MCF 10A (cell line): ENCODE measurements at regions of chr11 and their contacts with region 1.

Region 1: DNA sequence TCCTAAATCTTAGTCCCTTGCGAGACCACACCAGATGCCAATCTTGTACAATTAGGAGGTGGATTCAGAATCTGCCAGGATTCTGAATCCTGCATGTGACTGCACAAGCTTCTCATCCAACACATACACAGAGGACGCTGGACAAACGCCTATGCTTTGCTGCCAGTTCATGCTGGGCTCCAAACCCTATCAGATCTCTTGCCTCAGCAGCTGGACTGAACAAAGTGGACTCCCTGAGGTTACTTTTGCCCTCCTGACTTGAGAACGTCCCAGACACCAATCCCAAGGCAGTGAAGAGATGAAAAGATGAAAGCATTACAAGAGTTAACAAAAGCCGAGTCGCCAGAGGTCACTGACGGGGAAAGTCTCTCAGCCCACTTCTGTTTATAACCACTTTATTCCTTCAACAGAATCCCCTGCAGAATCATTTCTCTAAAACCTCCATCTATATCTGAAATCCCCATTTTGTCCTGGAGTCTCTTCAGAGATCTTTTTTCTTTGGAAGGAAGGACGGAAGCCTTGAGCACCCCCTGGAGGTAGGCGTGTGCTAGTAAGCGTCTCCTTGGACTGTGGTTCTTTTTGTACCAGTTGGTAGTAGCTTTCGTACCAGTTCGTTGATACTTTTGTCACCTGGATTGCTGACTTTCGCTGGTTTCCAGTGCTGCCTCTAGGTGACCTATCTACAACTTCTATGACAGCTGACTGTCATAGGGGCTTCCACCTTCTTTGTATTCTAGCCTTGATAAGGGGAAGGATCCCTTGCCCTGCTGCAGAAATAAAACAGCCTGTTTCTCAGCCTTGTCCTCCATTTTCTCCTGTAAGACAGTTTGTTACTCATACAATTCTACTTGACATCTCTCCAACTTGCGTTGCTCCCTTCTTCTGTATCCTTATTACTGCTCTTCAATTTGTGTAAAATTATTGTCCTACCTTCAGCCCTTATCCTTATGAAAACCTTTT is 26.1 kb upstream of the EED start:
- DNase-seq: peak; percentile 79
- H3K4me3 Mint-ChIP-seq: no peak overlapping the region
- H3K27ac Mint-ChIP-seq: no peak overlapping the region
- H3K4me1 Mint-ChIP-seq: peaks cover 6% of the 10 kb centered on the region
- H3K27me3 Mint-ChIP-seq: no peaks in the 10 kb centered on the region
- CTCF ChIP-seq: peak; percentile 81

Region 2: DNA sequence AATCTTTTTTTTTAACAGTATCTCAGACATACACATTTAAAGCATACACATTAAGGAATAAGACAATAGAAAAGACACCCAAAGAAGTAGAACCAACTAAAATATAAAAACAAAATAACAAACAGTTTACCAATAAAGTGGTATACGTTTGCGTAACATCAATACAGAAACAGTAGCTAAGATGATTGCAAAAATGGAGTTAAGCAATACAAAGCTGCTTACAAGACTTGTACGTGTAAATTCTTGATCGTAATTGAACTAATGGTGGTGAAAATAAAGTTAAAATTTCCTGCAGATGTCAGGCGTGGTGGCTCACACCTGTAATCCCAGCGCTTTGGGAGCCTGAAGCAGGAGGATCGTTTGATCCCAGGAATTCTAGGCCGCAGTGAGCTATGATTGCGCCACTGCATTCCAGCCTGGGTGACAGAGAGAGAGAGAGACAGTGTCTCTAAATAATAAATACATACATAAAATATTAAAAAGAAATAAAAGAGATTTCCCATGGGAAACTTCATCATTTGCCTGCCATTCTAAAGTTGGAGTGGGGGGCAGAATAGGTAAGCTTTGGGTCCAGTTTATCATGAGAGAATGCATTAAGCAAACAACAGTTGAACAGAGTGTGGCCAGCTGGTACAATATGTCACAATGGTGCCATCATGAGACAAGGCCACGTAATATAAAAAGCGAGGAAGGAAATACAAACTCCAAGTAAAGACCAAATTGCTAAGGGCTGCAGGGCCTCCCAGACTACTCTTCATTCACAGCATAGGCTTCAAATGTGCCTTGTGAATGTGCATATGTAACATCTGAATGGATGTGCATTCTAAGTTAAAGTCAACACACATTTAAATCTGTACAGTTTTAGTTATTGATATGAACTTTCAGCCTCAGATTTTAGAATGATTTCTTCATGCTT is 12.7 kb before region 1 on chr11:
- CTCF ChIA-PET with region 1: interaction called, 11 read pairs
- POLR2A ChIA-PET with region 1: no interaction called
- intact Hi-C with region 1: no loop called
- DNase-seq: no peak
- H3K4me3 Mint-ChIP-seq: no peak overlapping the region
- H3K27ac Mint-ChIP-seq: no peak overlapping the region
- H3K4me1 Mint-ChIP-seq: no peaks in the 10 kb centered on the region
- H3K27me3 Mint-ChIP-seq: no peaks in the 10 kb centered on the region
- CTCF ChIP-seq: no peak

Region 3: GRCh38 chr11:86230921-86231430 is 12.6 kb after region 1 on chr11:
- CTCF ChIA-PET with region 1: interaction called, 24 read pairs
- POLR2A ChIA-PET with region 1: no interaction called
- intact Hi-C with region 1: no loop called
- DNase-seq: peak; percentile 40
- H3K4me3 Mint-ChIP-seq: no peak overlapping the region
- H3K27ac Mint-ChIP-seq: no peak overlapping the region
- H3K4me1 Mint-ChIP-seq: peaks cover 18% of the 10 kb centered on the region
- H3K27me3 Mint-ChIP-seq: no peaks in the 10 kb centered on the region
- CTCF ChIP-seq: no peak